ENCODE measurements at regions of chr4 and their contacts with region 1.

Region 1: GRCh38 chr4:83846193-83846830 is 310.4 kb downstream of the GPAT3 start:
- DNase-seq: no peak

Region 2: GRCh38 chr4:83574247-83574646 is 272.1 kb before region 1 on chr4:
- intact Hi-C with region 1: no loop called
- DNase-seq: no peak

Region 3: DNA sequence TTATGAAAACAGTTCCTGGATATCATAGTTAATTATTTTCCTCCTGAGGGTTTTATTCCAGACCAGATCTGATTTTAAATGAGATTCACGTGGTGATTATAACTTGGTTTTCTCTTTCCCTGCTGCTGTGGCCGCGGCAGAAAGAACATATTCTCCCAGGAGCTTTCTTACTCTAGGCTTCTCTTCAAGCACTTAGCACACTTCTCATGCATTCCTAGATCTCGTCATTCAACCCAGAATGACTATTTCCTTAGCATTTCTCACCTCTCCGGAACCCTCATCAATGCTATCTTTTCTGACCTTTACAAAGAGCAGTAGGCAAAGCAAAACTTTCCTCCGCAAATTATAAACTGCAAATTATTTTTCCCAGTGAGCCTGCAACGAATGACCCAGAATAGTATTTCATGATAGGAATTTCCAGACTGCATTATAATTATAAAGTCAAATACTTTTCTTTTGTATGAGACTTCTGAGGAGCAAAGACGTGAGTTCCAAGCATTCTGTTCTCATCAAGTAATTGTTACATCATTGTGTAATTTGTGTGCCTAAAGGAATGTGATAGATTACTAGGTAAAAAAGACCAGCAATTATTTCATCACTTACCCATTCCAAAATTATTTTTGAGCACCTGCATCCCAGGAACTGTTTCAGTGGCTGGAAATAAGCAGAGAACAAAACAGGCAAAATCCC is 187.4 kb before region 1 on chr4:
- intact Hi-C with region 1: loop called (anchors 10 kb)
- DNase-seq: no peak

Region 4: GRCh38 chr4:83771113-83771705 is 75.1 kb before region 1 on chr4:
- intact Hi-C with region 1: no loop called
- DNase-seq: no peak